ENCODE measurements at regions of chr3 and their contacts with region 1.

Region 1: GRCh38 chr3:19946832-19947548 is at the start of gene RAB5A:
- DNase-seq: peak; percentile 99
- H3K4me3 ChIP-seq: peak within 1 kb of the TSS; percentile 88 to 100 (median 93)
- H3K27ac ChIP-seq: peak within 1 kb of the TSS; percentile 97
- H3K4me1 ChIP-seq: peaks cover 23% of the 10 kb centered on the region
- H3K27me3 ChIP-seq: no peaks in the 10 kb centered on the region
- CTCF ChIP-seq: no peak
- POLR2A ChIP-seq: peak; percentile 80
- total RNA-seq, gene RAB5A: 63.8 and 66.9 TPM in 2 replicates

Region 2: GRCh38 chr3:20023623-20024405 is 76.8 kb after region 1 on chr3:
- CTCF ChIA-PET with region 1: no interaction called
- POLR2A ChIA-PET with region 1: no interaction called
- dilution Hi-C with region 1: no loop called
- intact Hi-C with region 1: loop called (anchors 1 kb)
- DNase-seq: peak; percentile 70
- H3K4me3 ChIP-seq: no peak overlapping the region
- H3K27ac ChIP-seq: peak overlapping the region; percentile 13
- H3K4me1 ChIP-seq: peaks cover 21% of the 10 kb centered on the region
- H3K27me3 ChIP-seq: no peaks in the 10 kb centered on the region
- CTCF ChIP-seq: no peak
- POLR2A ChIP-seq: no peak

Region 3: DNA sequence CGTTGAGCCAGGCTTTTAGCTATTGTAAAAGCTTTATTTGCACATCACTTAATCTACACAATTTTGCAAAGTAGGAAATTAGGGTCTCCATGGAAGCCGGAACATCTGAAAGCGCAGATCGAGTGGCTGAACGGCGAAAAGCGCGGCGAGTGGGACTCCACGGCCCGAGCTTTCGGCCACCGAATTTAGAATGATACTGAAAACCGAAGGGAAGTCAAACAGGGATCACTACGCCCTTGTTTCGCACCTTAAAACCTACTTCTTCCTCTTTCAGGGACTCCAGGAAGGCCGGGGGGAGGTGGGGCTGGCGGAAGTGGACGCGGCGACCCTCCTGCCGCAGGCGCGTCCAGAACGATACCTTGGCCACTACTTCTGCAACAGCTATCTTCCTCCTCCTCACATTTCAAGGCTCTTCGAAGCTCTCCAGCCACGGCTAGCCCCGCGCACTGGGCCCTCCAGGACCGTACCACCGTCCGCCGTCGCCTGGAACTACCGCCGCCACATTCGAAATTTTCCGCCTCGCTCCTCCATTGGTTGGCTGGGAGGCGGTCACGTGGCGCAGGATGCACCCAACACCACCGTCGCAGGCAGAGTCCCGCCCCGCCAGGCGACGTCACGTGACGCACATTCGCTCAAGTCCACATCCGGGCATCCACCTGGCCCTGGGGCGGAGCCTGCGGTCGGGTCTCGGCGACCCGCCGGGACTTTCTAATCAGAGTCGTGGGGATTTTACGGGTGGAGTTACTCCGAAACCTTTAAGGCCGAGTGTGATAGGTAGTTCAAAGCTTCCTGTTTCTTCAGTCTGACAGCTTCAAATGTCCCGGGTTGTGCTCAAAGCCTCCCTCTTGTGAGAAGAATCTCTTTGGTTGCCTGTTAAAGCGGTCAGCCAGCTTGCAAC is 239.0 kb after region 1 on chr3 and contains the start of gene SGO1:
- CTCF ChIA-PET with region 1: no interaction called
- POLR2A ChIA-PET with region 1: no interaction called
- dilution Hi-C with region 1: no loop called
- intact Hi-C with region 1: loop called (anchors 1 kb)
- DNase-seq: peak; percentile 98
- H3K4me3 ChIP-seq: peak within 1 kb of the TSS; percentile 90 to 93 (median 91)
- H3K27ac ChIP-seq: peak within 1 kb of the TSS; percentile 85
- H3K4me1 ChIP-seq: peaks cover 21% of the 10 kb centered on the region
- H3K27me3 ChIP-seq: no peaks in the 10 kb centered on the region
- CTCF ChIP-seq: no peak
- POLR2A ChIP-seq: peak; percentile 91
- total RNA-seq, gene SGO1: 15.5 and 21.7 TPM in 2 replicates

Region 4: GRCh38 chr3:20256144-20256543 is 309.2 kb after region 1 on chr3:
- CTCF ChIA-PET with region 1: no interaction called
- POLR2A ChIA-PET with region 1: no interaction called
- dilution Hi-C with region 1: no loop called
- intact Hi-C with region 1: loop called (anchors 1 kb)
- DNase-seq: peak; percentile 92
- H3K4me3 ChIP-seq: peak overlapping the region in 1 of 3 experiments; percentile 11
- H3K27ac ChIP-seq: peak overlapping the region; percentile 83
- H3K4me1 ChIP-seq: peaks cover 18% of the 10 kb centered on the region
- H3K27me3 ChIP-seq: no peaks in the 10 kb centered on the region
- CTCF ChIP-seq: no peak
- POLR2A ChIP-seq: no peak

Region 5: DNA sequence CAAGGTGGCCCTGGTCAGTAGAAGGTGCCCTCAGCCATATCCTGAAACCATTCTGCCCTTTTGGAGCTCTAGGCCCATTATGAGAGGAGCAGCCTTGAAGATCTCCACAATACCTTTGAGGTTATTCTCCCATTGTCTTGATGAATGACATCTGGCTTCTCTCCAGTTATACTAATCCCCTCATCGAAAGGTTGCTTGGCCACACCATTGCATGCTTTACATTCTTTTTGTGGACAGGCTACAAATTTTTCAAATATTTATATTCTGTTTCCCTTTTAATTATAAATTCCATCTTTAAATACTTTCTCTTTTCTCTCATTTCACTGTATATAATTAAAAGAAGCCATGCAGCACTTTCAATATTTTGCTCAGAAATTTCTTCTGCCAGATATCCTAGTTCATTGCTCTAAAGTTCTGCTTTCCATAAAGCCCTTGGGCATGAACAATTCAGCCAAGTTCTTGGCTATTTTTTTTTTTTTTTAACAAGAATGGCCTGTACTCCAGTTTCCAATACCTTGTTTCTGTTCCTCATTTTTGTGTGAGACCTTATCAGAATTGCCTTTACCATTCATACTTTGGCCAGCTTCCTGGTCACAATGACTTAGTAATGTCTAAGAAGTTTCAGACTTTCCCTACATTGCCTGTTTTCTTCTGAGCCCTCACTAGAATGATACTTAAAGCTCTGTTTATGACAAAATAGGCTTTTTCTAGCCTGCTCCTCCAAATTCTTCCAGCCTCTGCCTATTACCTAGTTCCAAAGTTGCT is 377.9 kb after region 1 on chr3:
- CTCF ChIA-PET with region 1: no interaction called
- POLR2A ChIA-PET with region 1: no interaction called
- dilution Hi-C with region 1: no loop called
- intact Hi-C with region 1: no loop called
- DNase-seq: no peak
- H3K4me3 ChIP-seq: no peak overlapping the region
- H3K27ac ChIP-seq: no peak overlapping the region
- H3K4me1 ChIP-seq: no peaks in the 10 kb centered on the region
- H3K27me3 ChIP-seq: peaks cover 0 to 2% of the 10 kb centered on the region in 2 experiments
- CTCF ChIP-seq: no peak
- POLR2A ChIP-seq: no peak

Region 6: DNA sequence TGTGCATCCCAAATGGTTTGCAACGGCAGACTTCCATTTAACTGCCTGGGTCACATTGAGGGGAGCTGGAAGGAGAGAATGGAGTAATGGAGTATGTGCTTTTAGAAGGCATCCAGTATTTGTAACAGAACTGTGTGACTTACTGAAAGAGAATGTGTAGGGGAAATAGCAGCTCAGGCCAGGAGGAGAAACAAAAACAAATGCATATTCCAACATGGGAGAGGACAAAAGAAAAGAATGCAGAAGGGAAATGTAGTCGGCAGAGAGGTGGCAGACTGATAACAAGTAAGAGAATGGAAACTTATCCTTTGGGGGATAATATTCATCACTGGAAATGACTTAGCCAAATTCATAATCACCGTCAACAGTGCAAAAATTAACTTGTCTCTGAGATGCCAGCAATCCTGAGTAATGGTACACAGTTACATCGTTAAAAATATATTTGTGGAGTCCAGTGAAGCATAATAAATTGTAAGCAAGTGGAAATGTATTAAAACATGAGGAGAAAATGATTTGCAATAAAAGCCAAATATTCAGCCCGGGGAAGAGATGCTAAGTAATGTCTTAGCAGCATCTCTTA is 533.9 kb after region 1 on chr3:
- CTCF ChIA-PET with region 1: no interaction called
- POLR2A ChIA-PET with region 1: no interaction called
- dilution Hi-C with region 1: no loop called
- intact Hi-C with region 1: loop called (anchors 1 kb)
- DNase-seq: peak; percentile 94
- H3K4me3 ChIP-seq: peak overlapping the region in 1 of 3 experiments; percentile 30
- H3K27ac ChIP-seq: peak overlapping the region; percentile 81
- H3K4me1 ChIP-seq: peaks cover 33% of the 10 kb centered on the region
- H3K27me3 ChIP-seq: no peaks in the 10 kb centered on the region
- CTCF ChIP-seq: no peak
- POLR2A ChIP-seq: peak; percentile 52

Region 7: GRCh38 chr3:21672303-21672702 is 1725.3 kb after region 1 on chr3:
- CTCF ChIA-PET with region 1: no interaction called
- POLR2A ChIA-PET with region 1: no interaction called
- dilution Hi-C with region 1: no loop called
- intact Hi-C with region 1: loop called (anchors 5 kb)
- DNase-seq: peak; percentile 83
- H3K4me3 ChIP-seq: no peak overlapping the region
- H3K27ac ChIP-seq: peak overlapping the region; percentile 56
- H3K4me1 ChIP-seq: peaks cover 22% of the 10 kb centered on the region
- H3K27me3 ChIP-seq: no peaks in the 10 kb centered on the region
- CTCF ChIP-seq: no peak
- POLR2A ChIP-seq: no peak